ENCODE measurements at regions of chr1 and their contacts with region 1.

Region 1: GRCh38 chr1:16078925-16079656 is 5.6 kb upstream of the FAM131C start:
- DNase-seq: peak; percentile 70 to 93 (median 91)
- ATAC-seq: peak; percentile 59 to 69
- H3K4me3 ChIP-seq: no peak overlapping the region
- H3K27ac ChIP-seq: no peak overlapping the region
- H3K4me1 ChIP-seq: peaks cover 8% of the 10 kb centered on the region
- H3K27me3 ChIP-seq: no peaks in the 10 kb centered on the region

Region 2: GRCh38 chr1:16139473-16139962 is 60.4 kb after region 1 on chr1:
- intact Hi-C with region 1: loop called in 1 of 4 experiments (anchors 10 kb)
- DNase-seq: no peak
- ATAC-seq: no peak
- H3K4me3 ChIP-seq: no peak overlapping the region
- H3K27ac ChIP-seq: peak overlapping the region; percentile 9
- H3K4me1 ChIP-seq: peaks cover 30% of the 10 kb centered on the region
- H3K27me3 ChIP-seq: no peaks in the 10 kb centered on the region

Region 3: GRCh38 chr1:16187748-16188401 is 108.8 kb after region 1 on chr1:
- intact Hi-C with region 1: loop called (anchors 2 kb)
- DNase-seq: peak; percentile 77 to 93 (median 91)
- ATAC-seq: peak; percentile 71 to 77
- H3K4me3 ChIP-seq: no peak overlapping the region
- H3K27ac ChIP-seq: no peak overlapping the region
- H3K4me1 ChIP-seq: peaks cover 2% of the 10 kb centered on the region
- H3K27me3 ChIP-seq: no peaks in the 10 kb centered on the region

Region 4: GRCh38 chr1:16286122-16286521 is 207.0 kb after region 1 on chr1:
- intact Hi-C with region 1: no loop called
- DNase-seq: no peak
- ATAC-seq: no peak
- H3K4me3 ChIP-seq: no peak overlapping the region
- H3K27ac ChIP-seq: no peak overlapping the region
- H3K4me1 ChIP-seq: no peaks in the 10 kb centered on the region
- H3K27me3 ChIP-seq: no peaks in the 10 kb centered on the region

Region 5: DNA sequence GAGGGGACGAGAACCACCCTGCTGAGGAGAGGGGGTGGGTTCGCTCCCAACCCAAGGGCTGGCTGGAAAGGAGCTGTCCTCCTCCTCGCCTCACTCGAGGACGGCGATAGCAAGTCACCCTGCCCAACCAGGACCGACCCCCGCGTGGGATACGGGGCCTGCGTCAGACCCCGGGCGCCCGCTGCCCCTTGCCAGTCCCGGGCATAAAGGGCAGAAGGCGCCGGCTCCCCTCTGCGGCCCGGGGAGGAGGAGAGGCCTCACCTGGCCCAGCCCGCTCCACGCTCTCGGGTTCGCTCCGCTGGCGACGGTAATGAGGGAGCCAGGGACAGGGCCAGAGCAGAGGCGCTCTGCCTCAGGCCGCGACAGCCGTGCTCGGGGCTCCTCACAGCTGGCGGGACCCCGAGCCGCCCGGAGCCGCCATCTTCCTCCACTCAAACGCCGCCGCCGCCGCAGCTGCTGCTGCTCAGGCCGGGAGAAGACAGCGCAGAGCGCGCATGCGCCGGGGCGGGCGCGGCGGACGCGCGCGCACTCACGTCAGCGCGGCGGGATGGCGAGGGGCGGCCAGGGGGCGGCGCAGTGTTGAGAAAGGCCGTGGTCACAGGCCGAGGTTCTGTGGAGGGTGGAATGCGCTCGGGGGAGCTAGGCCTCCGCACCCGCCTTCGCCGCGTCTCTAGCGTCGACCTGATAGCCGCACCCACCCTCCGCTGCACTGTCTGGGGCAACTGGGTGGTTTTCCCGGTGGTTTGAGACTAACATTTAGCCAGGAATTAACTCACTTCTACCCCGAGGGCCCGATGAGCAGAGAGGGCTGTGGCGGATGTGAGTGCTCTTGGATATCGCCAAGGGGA is 273.1 kb after region 1 on chr1 and contains the start of gene FBXO42:
- intact Hi-C with region 1: loop called in 1 of 4 experiments (anchors 10 kb)
- DNase-seq: peak; percentile 92 to 97 (median 97)
- ATAC-seq: peak; percentile 97 to 98
- H3K4me3 ChIP-seq: peak within 1 kb of the TSS; percentile 77
- H3K27ac ChIP-seq: peak within 1 kb of the TSS; percentile 94
- H3K4me1 ChIP-seq: no peaks in the 10 kb centered on the region
- H3K27me3 ChIP-seq: no peaks in the 10 kb centered on the region
- total RNA-seq, gene FBXO42: 15.7 to 18.1 (median 16.4) TPM

Region 6: GRCh38 chr1:16366722-16367257 is 287.7 kb after region 1 on chr1 and contains the start of gene SZRD1:
- intact Hi-C with region 1: loop called in 2 of 4 experiments (anchors 5 to 10 kb)
- DNase-seq: peak; percentile 96 to 99 (median 99)
- ATAC-seq: peak; percentile 92 to 93
- H3K4me3 ChIP-seq: peak within 1 kb of the TSS; percentile 74
- H3K27ac ChIP-seq: peak within 1 kb of the TSS; percentile 96
- H3K4me1 ChIP-seq: no peaks in the 10 kb centered on the region
- H3K27me3 ChIP-seq: no peaks in the 10 kb centered on the region
- total RNA-seq, gene SZRD1: 106 to 132 (median 109) TPM